Ascending aorta (tissue), 2 donors: ENCODE measurements at regions of chr10 and their contacts with region 1.

Region 1: DNA sequence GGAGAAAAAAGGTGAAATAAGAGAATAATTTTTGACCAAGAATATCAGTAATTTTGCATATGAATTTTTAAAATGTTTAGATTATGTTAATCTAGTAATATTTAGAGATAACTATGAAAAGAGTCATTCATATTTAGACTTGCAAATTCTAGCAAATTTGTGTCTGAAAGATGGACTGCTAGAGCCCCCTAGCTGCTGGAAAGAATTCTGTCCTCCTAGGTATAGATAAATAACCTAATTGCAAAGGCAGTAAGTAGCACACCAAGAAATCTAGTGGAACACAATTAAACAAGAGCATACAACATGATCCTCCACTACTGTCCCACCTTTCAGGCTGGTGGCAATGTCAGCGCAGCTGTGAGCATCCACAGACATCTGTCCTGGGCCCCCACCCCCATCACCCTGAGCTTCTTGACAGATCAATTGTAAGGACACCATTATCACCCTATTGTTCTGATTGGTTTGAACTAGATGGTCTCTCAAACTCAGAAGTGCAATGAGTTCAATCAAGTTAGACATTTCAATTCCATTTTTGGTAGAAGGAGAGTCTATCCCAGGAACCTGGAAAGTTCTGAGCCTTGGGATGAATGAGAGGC is 15.0 kb upstream of the GFRA1 start:
- DNase-seq: no peak
- H3K4me3 ChIP-seq: no peak overlapping the region
- H3K27ac ChIP-seq: no peak overlapping the region
- H3K4me1 ChIP-seq: no peaks in the 10 kb centered on the region
- H3K27me3 ChIP-seq: no peaks in the 10 kb centered on the region
- CTCF ChIP-seq: peak; percentile 45 to 75 (median 68)

Region 2: DNA sequence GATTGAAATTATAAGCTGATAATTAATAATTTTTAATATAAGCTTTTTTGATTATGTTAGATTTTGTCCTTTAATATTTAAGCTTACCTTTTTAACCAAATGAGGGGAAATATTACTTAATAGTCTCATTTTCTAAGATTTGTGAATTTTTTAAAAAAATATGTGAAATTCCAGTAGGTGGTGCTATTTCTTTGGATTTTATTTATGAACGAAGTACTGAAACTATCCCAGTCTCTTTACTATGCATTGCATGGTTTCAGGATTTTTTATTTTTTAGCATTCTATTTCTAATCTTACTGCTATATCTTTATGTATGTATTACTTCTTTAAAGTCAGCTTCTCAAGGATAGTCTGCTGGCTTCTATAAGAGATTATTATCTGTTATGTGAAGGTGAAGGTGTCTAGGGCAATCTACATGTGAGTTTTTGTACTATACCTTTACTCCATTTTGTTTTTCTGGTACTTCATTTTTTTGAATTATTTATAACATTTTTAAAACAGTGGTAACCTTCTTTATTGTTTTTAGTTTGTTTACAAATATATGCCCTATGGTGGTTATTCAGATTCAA is 1116.5 kb before region 1 on chr10:
- intact Hi-C with region 1: loop called (anchors 10 kb)
- DNase-seq: no peak
- H3K4me3 ChIP-seq: no peak overlapping the region
- H3K27ac ChIP-seq: no peak overlapping the region
- H3K4me1 ChIP-seq: no peaks in the 10 kb centered on the region
- H3K27me3 ChIP-seq: no peaks in the 10 kb centered on the region
- CTCF ChIP-seq: peak in 2 of 3 experiments; percentile 12 to 43

Region 3: DNA sequence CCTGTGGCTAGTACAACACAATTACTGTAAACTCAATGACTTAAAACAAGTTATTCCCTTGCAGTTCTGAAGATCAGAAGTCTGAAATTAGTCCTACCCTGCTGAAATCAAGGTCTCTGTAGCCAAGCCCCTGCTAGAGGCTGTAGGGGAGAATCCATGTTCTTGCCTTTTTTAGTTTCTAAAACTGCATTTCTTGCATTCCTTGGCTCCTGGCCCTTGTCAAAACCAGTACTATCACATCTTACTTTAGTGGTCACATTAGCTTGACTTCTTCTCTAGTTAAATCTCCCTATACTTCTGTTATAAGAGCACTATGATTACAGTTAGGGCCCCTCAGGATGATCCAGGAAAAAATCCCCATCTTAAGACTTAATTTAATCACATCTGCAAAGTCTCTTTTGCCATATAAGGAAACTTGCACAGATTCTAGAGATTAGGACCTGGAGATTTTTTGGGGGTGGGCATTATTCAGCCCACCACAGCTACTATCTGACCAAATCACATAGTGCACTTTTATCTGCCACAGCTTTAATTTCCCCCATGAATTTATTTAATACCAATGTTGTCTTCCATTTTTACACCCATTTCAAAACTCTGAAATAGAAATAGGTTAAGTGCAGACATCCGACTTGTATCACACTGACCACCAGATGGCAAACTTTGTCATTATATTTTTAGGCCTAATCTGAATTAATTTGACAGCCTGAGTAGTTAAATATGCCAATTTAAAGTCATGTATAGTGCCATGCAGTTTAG is 581.8 kb before region 1 on chr10:
- intact Hi-C with region 1: loop called (anchors 1 kb)
- DNase-seq: no peak
- H3K4me3 ChIP-seq: no peak overlapping the region
- H3K27ac ChIP-seq: no peak overlapping the region
- H3K4me1 ChIP-seq: no peaks in the 10 kb centered on the region
- H3K27me3 ChIP-seq: no peaks in the 10 kb centered on the region
- CTCF ChIP-seq: peak; percentile 29 to 62 (median 44)

Region 4: DNA sequence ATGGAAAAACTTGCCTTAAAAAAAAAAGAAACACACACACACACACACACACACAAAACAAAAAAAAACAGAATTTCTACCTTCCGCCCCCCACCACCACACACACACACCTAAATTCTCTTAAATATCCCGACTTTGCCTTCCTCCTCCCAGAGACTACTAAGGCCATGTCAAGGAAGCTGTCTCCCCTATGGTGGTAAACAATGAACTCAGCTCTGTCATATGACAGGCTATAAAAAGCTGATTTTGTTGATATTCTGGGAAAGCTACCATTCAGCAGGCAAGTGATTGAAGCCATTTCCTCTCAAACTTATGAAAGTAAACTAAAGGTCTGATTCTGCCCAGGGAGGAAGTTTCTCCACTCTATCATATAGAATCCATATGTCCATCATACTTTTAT is 486.0 kb before region 1 on chr10:
- intact Hi-C with region 1: loop called (anchors 2 kb)
- DNase-seq: no peak
- H3K4me3 ChIP-seq: no peak overlapping the region
- H3K27ac ChIP-seq: no peak overlapping the region
- H3K4me1 ChIP-seq: peaks cover 0 to 4% of the 10 kb centered on the region in 2 donors
- H3K27me3 ChIP-seq: no peaks in the 10 kb centered on the region
- CTCF ChIP-seq: no peak

Region 5: DNA sequence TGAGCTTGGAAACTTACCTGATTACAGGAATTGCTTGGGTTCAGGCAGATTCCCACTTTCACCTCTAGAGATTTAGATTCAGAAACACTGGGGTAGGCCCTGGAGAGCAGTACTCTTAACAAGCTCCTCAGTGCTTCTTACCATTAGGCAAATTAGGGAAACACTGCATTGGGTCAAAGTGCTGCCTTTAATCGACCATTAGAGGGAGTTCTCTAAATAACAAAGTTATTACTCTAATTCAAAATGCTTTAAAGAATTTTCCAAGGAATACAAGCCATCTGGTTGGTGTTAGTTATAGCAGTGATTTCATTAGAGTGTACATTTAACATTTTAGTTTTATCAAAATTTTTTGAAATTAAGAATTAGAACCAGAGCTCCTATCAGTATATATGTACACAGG is 339.5 kb before region 1 on chr10:
- intact Hi-C with region 1: loop called (anchors 5 kb)
- DNase-seq: no peak
- H3K4me3 ChIP-seq: no peak overlapping the region
- H3K27ac ChIP-seq: no peak overlapping the region
- H3K4me1 ChIP-seq: peaks cover 4 to 8% of the 10 kb centered on the region in 2 donors
- H3K27me3 ChIP-seq: no peaks in the 10 kb centered on the region
- CTCF ChIP-seq: peak; percentile 12 to 47 (median 23)